Keratinocyte (primary cell): ENCODE measurements at regions of chr20 and their contacts with region 1.

Region 1: DNA sequence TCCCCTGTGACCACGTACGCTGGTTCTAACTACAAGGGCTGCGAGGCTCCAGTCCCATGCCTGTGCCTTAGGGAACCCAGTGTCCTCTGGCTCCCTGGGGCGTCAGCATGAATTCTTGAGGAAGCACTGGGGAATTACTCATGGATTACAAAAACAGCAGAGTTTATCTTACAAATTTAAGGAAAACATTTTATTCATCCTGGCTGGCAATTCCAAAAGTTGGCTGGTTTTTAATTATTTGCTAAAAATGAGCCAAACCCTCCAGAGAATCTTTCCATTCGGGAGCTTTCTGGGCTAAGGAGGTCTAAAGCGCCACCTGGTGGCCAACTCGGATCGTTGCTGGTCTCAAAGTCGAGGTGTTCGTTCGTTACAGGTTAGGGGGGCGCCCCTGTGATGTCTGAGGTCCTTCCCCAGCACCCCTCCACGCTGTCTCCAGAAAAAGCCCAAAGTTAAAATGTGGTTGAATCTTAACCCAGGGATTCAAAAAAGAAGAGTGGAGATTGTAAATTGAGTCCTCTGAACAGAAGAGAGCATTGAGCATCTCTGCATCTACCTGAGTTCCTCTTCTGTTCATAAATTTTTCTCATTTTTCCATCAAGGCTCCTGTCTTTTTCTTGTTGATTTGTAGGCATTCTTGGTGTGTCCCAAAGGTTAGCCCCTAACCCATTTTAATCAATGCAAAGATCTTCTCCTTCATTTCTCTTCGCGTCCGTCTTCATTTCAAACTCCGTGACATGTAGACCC is 99.4 kb downstream of the BFSP1 start:
- DNase-seq: no peak
- H3K4me3 ChIP-seq: no peak overlapping the region
- H3K27ac ChIP-seq: no peak overlapping the region
- H3K4me1 ChIP-seq: no peaks in the 10 kb centered on the region
- H3K27me3 ChIP-seq: peaks cover 11% of the 10 kb centered on the region
- CTCF ChIP-seq: peak; percentile 73 to 87 (median 83)

Region 2: DNA sequence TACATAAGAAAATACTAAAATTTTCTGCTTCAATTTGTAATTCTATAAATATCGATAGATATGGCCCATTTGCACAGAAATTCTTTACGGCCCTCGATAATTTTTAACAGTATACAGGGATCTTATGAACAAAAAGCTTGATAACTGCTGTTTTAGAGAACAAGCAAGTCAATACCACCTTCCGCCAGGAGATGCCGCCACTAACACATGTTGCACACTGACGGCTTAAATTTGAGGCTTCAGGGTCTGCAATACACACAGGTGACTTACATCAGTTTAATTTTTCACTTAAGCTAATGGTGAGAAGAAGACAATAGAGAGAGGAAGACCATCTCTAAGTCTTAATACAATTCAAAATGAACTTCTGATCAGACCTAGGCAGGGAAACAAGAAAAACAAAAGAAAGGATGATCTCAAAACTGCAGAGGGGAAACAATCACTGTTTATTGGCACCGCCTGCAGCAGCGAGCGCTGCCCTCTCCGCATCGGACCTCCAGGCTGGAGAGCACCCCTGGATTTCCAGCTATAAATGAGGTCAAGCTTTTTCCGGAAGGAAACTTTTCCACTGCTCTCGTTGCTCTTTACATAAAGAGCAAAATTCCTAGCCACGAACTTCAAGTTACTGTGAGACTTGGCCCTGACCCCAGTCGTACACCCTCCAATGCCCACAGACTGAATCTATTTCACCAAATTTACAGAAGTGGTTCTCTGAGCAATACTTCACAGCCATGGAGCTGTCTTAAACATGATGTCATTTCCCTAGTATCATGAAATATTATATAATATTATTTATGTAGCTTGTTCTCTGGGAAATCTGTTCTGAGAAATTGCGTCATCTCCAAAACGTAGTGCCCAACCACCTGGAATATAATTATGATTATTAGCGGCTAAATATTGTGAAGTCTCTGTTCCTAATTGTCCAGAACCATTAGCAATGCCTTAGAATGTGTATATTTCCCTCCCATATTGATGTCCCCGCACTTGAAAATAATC is 629.6 kb before region 1 on chr20:
- dilution Hi-C with region 1: loop called (anchors 25 kb)
- DNase-seq: peak; percentile 9
- H3K4me3 ChIP-seq: no peak overlapping the region
- H3K27ac ChIP-seq: no peak overlapping the region
- H3K4me1 ChIP-seq: no peaks in the 10 kb centered on the region
- H3K27me3 ChIP-seq: peaks cover 5% of the 10 kb centered on the region
- CTCF ChIP-seq: peak; percentile 72 to 84 (median 81)

Region 3: DNA sequence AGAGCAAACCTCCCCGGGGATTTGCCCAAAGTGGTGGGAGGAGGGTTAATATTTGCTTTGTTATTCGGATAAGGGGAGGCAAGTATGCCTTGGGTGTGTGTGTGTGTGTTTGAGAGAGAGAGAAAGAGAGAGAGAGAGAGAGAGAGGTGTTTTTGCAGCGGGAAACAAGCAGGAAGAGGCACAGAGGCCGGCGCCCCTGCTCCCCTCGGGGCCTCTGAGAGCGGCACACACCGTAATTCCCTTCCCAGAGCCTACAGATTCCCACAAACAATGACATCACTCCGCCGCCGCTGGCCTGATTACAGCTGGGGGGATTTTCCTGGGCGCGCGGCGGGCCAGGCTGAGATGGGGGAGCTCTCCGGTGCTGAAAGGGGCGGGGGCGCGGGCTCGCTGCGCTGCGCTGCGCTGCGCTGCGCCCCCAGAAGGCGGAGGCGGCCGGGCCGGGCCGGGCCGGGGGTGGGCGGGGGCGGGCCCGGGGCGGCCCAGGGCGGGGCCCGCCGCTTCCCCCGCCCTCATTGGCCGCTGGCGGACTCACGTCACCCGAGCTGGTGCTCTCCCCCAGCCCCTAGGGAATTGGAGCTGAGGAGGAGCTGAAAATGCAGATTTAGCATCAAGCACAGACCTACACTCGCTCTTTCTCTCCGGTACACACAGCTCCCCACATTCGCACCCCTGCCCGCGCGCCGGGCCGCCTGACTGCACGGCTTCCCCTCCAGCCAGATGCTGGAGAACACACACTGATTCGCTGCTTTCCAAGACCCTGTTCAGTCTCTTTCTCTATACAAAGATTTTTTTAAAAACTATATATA is 205.2 kb before region 1 on chr20 and contains the start of gene PCSK2:
- dilution Hi-C with region 1: no loop called
- DNase-seq: no peak
- H3K4me3 ChIP-seq: no peak within 1 kb of the TSS
- H3K27ac ChIP-seq: no peak within 1 kb of the TSS
- H3K4me1 ChIP-seq: no peaks in the 10 kb centered on the region
- H3K27me3 ChIP-seq: peaks cover 48% of the 10 kb centered on the region
- CTCF ChIP-seq: no peak
- polyA plus RNA-seq, gene PCSK2: not detected in 3 replicates

Region 4: GRCh38 chr20:17471606-17472187 is 39.9 kb after region 1 on chr20:
- dilution Hi-C with region 1: no loop called
- DNase-seq: no peak
- H3K4me3 ChIP-seq: no peak overlapping the region
- H3K27ac ChIP-seq: no peak overlapping the region
- H3K4me1 ChIP-seq: no peaks in the 10 kb centered on the region
- H3K27me3 ChIP-seq: no peaks in the 10 kb centered on the region
- CTCF ChIP-seq: no peak

Region 5: GRCh38 chr20:17497821-17498580 is 66.2 kb after region 1 on chr20:
- dilution Hi-C with region 1: no loop called
- DNase-seq: no peak
- H3K4me3 ChIP-seq: no peak overlapping the region
- H3K27ac ChIP-seq: no peak overlapping the region
- H3K4me1 ChIP-seq: peaks cover 4% of the 10 kb centered on the region
- H3K27me3 ChIP-seq: no peaks in the 10 kb centered on the region
- CTCF ChIP-seq: no peak